ENCODE measurements at regions of chr10 and their contacts with region 1.

Region 1: GRCh38 chr10:89414146-89414878 is at the start of gene IFIT5:
- DNase-seq: no peak
- H3K4me3 ChIP-seq: peak within 1 kb of the TSS; percentile 61
- H3K27me3 ChIP-seq: no peaks in the 10 kb centered on the region
- CTCF ChIP-seq: no peak
- polyA plus RNA-seq, gene IFIT5: 6.5 and 13.9 TPM in 2 replicates

Region 2: DNA sequence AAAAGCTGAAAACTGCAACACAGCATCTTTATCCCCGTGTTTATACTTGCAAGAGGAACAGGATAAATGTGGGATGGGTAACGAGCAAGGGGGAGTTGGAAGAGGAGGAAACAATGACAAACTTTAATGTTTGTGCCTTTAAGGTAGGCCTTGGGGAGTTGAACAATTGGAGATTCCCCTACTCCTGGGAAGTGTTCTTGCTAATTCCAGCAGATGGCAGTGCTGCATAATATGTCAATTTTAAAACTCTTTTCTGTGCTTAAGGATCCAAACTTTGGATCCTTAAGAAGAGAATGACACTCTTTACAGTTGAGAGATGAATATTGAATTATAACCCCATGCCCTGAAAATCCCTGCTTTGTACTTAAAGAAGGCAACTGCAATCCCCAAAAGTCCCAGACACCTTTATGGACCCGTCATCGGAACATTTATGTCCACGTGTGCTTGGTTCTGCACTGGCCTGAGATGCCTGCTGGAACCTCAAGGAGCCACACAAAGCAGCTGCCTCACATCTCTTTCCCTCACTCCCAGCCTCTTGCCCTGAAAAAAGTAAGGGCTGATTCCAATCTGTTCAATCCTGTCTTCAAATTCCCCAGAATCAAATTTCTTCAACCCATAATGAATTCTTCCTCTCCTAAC is 12.0 kb after region 1 on chr10:
- CTCF ChIA-PET with region 1: interaction called, 10 read pairs
- POLR2A ChIA-PET with region 1: interaction called, 17 read pairs
- DNase-seq: no peak
- H3K4me3 ChIP-seq: no peak overlapping the region
- H3K27me3 ChIP-seq: no peaks in the 10 kb centered on the region
- CTCF ChIP-seq: peak; percentile 72

Measured in BJ (cell line).